Activated CD4-positive, alpha-beta T cell treated with anti-CD3 and anti-CD28 coated beads for 36 hours (primary cell): ENCODE measurements at regions of chr12 and their contacts with region 1.

Region 1: DNA sequence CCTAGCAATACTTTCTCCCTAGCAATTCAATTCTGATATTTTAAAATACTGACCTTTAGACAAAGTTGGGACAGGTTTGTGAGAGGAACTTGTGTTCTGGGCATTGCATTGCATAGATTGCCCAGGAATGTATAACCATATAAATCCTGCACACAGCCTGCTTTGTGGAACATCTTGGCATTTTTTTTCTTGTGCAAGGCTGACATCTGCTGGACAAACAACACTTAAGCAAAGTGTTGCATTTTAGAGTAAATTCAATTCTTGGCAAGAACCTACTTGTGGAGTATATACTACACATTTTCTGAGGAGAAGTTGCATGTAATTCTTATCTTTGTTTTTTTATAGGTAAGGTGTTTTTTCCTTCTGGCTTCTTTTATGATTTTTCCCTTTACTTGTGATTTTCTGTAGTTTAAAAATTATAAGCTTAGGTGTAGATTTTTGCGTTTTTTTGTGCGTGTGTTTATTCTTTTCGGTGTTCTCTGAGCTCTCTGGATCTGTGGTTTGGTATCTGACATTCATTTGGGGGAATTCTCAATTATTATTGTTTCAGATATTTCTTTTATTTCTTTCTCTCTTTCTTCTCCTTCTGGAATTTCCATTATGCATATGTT is 26.4 kb downstream of the TESPA1 start:
- DNase-seq: peak; percentile 65
- ATAC-seq: peak; percentile 20
- H3K4me3 Mint-ChIP-seq: no peak overlapping the region
- H3K27ac Mint-ChIP-seq: peak overlapping the region; percentile 80
- H3K4me1 Mint-ChIP-seq: peaks cover 88% of the 10 kb centered on the region
- H3K27me3 Mint-ChIP-seq: no peaks in the 10 kb centered on the region

Region 2: DNA sequence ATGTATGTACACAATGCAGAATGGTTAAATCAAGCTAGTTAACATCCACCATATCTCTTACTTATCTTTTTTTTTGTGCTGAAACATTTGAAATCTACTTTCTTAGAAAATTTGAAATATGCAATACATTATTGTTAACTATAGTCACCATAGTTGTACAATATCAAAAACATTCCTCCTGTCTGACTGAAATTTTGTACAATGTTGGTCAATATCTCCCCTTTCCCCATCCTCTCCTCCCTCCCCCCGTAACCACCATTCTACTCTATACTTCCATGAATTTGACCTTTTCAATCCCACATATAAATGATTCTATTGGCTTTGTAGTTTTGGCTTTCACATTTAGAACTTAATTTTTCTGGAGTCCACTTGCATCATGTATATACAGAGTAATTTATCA is 246.5 kb before region 1 on chr12:
- CTCF ChIA-PET with region 1: no interaction called
- POLR2A ChIA-PET with region 1: no interaction called
- intact Hi-C with region 1: no loop called
- DNase-seq: no peak
- ATAC-seq: no peak
- H3K4me3 Mint-ChIP-seq: no peak overlapping the region
- H3K27ac Mint-ChIP-seq: no peak overlapping the region
- H3K4me1 Mint-ChIP-seq: no peaks in the 10 kb centered on the region
- H3K27me3 Mint-ChIP-seq: peaks cover 6% of the 10 kb centered on the region

Region 3: GRCh38 chr12:54723379-54724256 is 234.5 kb before region 1 on chr12:
- CTCF ChIA-PET with region 1: interaction called, 16 read pairs
- POLR2A ChIA-PET with region 1: no interaction called
- intact Hi-C with region 1: no loop called
- DNase-seq: peak; percentile 30
- ATAC-seq: peak; percentile 51
- H3K4me3 Mint-ChIP-seq: no peak overlapping the region
- H3K27ac Mint-ChIP-seq: no peak overlapping the region
- H3K4me1 Mint-ChIP-seq: no peaks in the 10 kb centered on the region
- H3K27me3 Mint-ChIP-seq: peaks cover 3% of the 10 kb centered on the region

Region 4: GRCh38 chr12:54734196-54734950 is 223.8 kb before region 1 on chr12:
- CTCF ChIA-PET with region 1: no interaction called
- POLR2A ChIA-PET with region 1: no interaction called
- intact Hi-C with region 1: no loop called
- DNase-seq: no peak
- ATAC-seq: no peak
- H3K4me3 Mint-ChIP-seq: no peak overlapping the region
- H3K27ac Mint-ChIP-seq: no peak overlapping the region
- H3K4me1 Mint-ChIP-seq: peaks cover 8% of the 10 kb centered on the region
- H3K27me3 Mint-ChIP-seq: no peaks in the 10 kb centered on the region

Region 5: DNA sequence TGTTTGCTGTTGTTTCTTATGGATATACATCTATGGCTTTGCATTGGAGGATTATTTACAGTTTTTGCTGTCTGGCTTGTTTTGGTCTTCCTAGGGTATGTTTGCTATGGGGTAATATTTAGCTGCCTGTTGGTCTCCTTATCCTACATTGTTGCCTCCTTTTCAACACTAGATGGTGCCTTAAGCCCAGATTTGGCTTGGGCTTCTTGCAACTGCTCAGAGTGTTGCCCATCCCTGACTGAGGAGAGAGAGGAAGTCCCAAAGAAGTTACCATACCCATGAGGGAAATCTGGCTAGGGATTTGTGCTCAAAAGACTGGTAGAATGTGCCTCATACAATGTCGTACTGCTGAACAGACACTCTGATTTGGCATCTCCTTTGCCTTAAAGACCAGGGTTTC is 198.4 kb before region 1 on chr12:
- CTCF ChIA-PET with region 1: interaction called, 23 read pairs
- POLR2A ChIA-PET with region 1: no interaction called
- intact Hi-C with region 1: no loop called
- DNase-seq: peak; percentile 22
- ATAC-seq: no peak
- H3K4me3 Mint-ChIP-seq: no peak overlapping the region
- H3K27ac Mint-ChIP-seq: no peak overlapping the region
- H3K4me1 Mint-ChIP-seq: peaks cover 8% of the 10 kb centered on the region
- H3K27me3 Mint-ChIP-seq: peaks cover 7% of the 10 kb centered on the region

Region 6: GRCh38 chr12:54859502-54859901 is 98.7 kb before region 1 on chr12:
- CTCF ChIA-PET with region 1: interaction called, 48 read pairs
- POLR2A ChIA-PET with region 1: interaction called, 3 read pairs
- intact Hi-C with region 1: loop called (anchors 1 kb)
- DNase-seq: no peak
- ATAC-seq: no peak
- H3K4me3 Mint-ChIP-seq: no peak overlapping the region
- H3K27ac Mint-ChIP-seq: no peak overlapping the region
- H3K4me1 Mint-ChIP-seq: peaks cover 26% of the 10 kb centered on the region
- H3K27me3 Mint-ChIP-seq: peaks cover 16% of the 10 kb centered on the region

Region 7: DNA sequence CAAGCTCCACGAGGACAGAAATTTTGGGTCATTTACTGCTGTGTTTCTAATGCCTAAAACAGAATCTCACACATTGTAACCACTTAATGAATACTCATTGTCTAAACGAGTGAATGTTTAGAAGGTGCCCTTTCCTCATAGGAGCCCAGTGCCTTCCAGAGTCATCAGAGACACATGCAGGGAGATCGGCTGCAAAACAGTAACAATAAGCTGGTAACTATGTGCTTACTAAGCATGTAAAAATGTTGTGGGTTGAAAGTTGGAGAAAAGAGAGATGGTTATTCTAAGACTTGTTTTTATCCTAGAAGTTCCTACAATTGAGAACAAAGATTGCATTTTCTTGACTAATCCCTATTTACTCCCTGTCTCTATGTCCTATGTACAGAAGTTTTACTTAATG is 19.0 kb after region 1 on chr12:
- CTCF ChIA-PET with region 1: interaction called, 123 read pairs
- POLR2A ChIA-PET with region 1: interaction called, 7 read pairs
- intact Hi-C with region 1: loop called in 1 of 2 experiments (anchors 2 kb)
- DNase-seq: no peak
- ATAC-seq: no peak
- H3K4me3 Mint-ChIP-seq: peak overlapping the region; percentile 78
- H3K27ac Mint-ChIP-seq: peak overlapping the region; percentile 82
- H3K4me1 Mint-ChIP-seq: peaks cover 88% of the 10 kb centered on the region
- H3K27me3 Mint-ChIP-seq: no peaks in the 10 kb centered on the region